Panc1 (cell line): ENCODE measurements at regions of chr3 and their contacts with region 1.

Region 1: GRCh38 chr3:48338635-48339034 is 5.2 kb upstream of the SPINK8 start:
- DNase-seq: no peak
- ATAC-seq: no peak
- H3K4me3 ChIP-seq: no peak overlapping the region
- H3K27ac ChIP-seq: no peak overlapping the region
- H3K4me1 ChIP-seq: no peaks in the 10 kb centered on the region
- H3K27me3 ChIP-seq: no peaks in the 10 kb centered on the region
- CTCF ChIP-seq: no peak

Region 2: DNA sequence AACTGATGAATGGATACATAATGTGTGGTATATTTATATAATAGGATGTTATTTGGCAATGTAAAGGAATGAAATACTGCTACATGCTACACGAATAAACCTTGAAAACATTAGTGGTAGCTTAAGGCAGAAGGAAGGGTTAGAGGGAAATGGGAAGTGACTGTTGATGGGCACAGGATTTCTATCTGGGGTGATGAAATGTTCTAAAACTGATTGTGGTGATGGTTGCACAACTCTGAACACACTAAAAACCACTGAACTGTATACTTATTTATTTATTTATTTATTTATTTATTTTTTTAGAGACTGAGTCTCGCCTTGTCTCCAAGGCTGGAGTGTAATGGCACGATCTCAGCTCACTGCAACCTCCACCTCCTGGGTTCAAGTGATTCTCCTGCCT is 190.1 kb after region 1 on chr3:
- CTCF ChIA-PET with region 1: no interaction called
- POLR2A ChIA-PET with region 1: interaction called, 10 read pairs
- in situ Hi-C with region 1: no loop called
- intact Hi-C with region 1: no loop called
- DNase-seq: no peak
- ATAC-seq: no peak
- H3K4me3 ChIP-seq: no peak overlapping the region
- H3K27ac ChIP-seq: no peak overlapping the region
- H3K4me1 ChIP-seq: no peaks in the 10 kb centered on the region
- H3K27me3 ChIP-seq: no peaks in the 10 kb centered on the region
- CTCF ChIP-seq: no peak